Transverse colon (tissue), 4 donors: ENCODE measurements at regions of chr1 and their contacts with region 1.

Region 1: GRCh38 chr1:108503076-108503740 is 53.1 kb downstream of the NBPF6 start:
- DNase-seq: no peak
- H3K4me3 ChIP-seq: no peak overlapping the region
- H3K27ac ChIP-seq: no peak overlapping the region
- H3K4me1 ChIP-seq: no peaks in the 10 kb centered on the region
- H3K27me3 ChIP-seq: peaks cover 6% of the 10 kb centered on the region
- CTCF ChIP-seq: no peak
- EP300 ChIP-seq: no peak
- POLR2A ChIP-seq: no peak

Region 2: GRCh38 chr1:107358619-107359327 is 1144.4 kb before region 1 on chr1:
- in situ Hi-C with region 1: no loop called
- intact Hi-C with region 1: no loop called
- DNase-seq: no peak
- H3K4me3 ChIP-seq: no peak overlapping the region
- H3K27ac ChIP-seq: no peak overlapping the region
- H3K4me1 ChIP-seq: no peaks in the 10 kb centered on the region
- H3K27me3 ChIP-seq: no peaks in the 10 kb centered on the region
- CTCF ChIP-seq: no peak
- EP300 ChIP-seq: no peak
- POLR2A ChIP-seq: no peak

Region 3: GRCh38 chr1:108559215-108560186 is 56.3 kb after region 1 on chr1 and contains the start of gene EEIG2:
- in situ Hi-C with region 1: loop called in 2 of 4 experiments (anchors 10 kb)
- intact Hi-C with region 1: no loop called
- DNase-seq: peak; percentile 94
- H3K4me3 ChIP-seq: peak within 1 kb of the TSS; percentile 68 to 82 (median 73)
- H3K27ac ChIP-seq: peak within 1 kb of the TSS; percentile 89 to 90 (median 89)
- H3K4me1 ChIP-seq: peaks cover 11 to 46% (median 24%) of the 10 kb centered on the region in 4 donors
- H3K27me3 ChIP-seq: no peaks in the 10 kb centered on the region
- CTCF ChIP-seq: peak; percentile 39 to 87 (median 75)
- EP300 ChIP-seq: peak; percentile 34
- POLR2A ChIP-seq: no peak
- total RNA-seq, gene EEIG2: 15.7 to 27.0 (median 24.9) TPM

Region 4: GRCh38 chr1:109181105-109181806 is 678.0 kb after region 1 on chr1:
- in situ Hi-C with region 1: no loop called
- intact Hi-C with region 1: no loop called
- DNase-seq: no peak
- H3K4me3 ChIP-seq: no peak overlapping the region
- H3K27ac ChIP-seq: peak overlapping the region; percentile 62 to 84 (median 67)
- H3K4me1 ChIP-seq: peaks cover 0 to 30% (median 20%) of the 10 kb centered on the region in 4 donors
- H3K27me3 ChIP-seq: no peaks in the 10 kb centered on the region
- CTCF ChIP-seq: no peak
- EP300 ChIP-seq: no peak
- POLR2A ChIP-seq: no peak